ENCODE measurements at regions of chr7 and their contacts with region 1.

Region 1: GRCh38 chr7:129914536-129915272 is 38.1 kb downstream of the UBE2H start:
- DNase-seq: peak; percentile 33 to 56
- ATAC-seq: peak; percentile 83 to 89 (median 86)
- H3K4me3 ChIP-seq: no peak overlapping the region
- H3K4me3 Mint-ChIP-seq: peak overlapping the region; percentile 84
- H3K27ac ChIP-seq: peak overlapping the region; percentile 49
- H3K27ac Mint-ChIP-seq: peak overlapping the region; percentile 81 to 94
- H3K4me1 ChIP-seq: peaks cover 29% of the 10 kb centered on the region
- H3K4me1 Mint-ChIP-seq: peaks cover 70 to 74% of the 10 kb centered on the region in 2 donors
- H3K27me3 ChIP-seq: no peaks in the 10 kb centered on the region
- H3K27me3 Mint-ChIP-seq: no peaks in the 10 kb centered on the region
- CTCF ChIP-seq: no peak

Region 2: DNA sequence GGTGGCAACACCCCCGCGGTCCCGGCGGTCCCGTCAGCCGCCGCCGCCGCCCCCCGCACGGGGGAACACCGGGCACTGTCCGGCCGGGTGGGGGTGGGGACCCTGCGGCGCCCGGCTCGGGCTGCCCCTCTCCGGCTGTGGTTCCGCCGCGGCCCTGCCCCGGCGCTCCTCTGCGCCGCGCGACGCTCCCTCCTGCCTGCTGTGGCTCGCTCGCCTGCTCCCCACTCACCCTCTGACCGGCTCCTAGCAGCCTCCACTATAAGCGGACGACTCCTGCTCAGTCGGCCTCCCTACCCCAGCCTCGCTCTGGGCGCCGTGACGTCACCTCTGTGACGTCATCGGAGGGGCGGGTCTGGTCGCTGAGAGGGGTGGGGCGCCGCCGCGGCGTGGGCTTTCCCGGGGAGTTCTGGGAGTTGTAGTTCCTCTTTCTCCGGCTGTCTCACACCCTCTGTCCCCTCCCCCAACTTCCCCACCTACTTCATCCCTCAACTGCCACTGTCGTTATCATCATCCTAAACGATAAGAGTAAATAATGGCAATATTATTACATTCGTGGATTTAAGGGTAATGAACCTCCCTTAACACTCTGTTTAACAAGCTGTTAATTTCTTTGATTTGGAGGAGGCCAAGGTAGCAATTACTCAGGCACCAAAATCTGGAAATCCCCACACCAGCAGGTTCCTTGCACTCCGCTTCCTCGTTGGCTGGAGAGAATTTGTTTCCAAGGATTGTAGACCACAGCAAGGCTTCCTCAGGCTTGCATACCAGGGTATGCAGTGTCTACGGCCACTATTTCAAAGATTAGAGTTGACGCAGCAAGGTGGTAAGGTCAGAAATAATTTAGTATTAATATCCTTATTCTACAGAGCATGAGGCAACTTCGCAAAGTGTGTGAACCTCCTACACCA is 38.2 kb after region 1 on chr7 and contains the start of gene UBE2H:
- intact Hi-C with region 1: loop called (anchors 2 kb)
- DNase-seq: peak; percentile 87 to 96
- ATAC-seq: peak; percentile 73 to 90 (median 83)
- H3K4me3 ChIP-seq: peak within 1 kb of the TSS; percentile 63
- H3K4me3 Mint-ChIP-seq: peak within 1 kb of the TSS; percentile 98
- H3K27ac ChIP-seq: peak within 1 kb of the TSS; percentile 80
- H3K27ac Mint-ChIP-seq: no peak within 1 kb of the TSS
- H3K4me1 ChIP-seq: peaks cover 43% of the 10 kb centered on the region
- H3K4me1 Mint-ChIP-seq: peaks cover 7 to 9% of the 10 kb centered on the region in 2 donors
- H3K27me3 ChIP-seq: no peaks in the 10 kb centered on the region
- H3K27me3 Mint-ChIP-seq: peaks cover 2 to 6% of the 10 kb centered on the region in 2 donors
- CTCF ChIP-seq: no peak
- total RNA-seq, gene UBE2H: 80.9 to 86.9 (median 83.1) TPM

Region 3: DNA sequence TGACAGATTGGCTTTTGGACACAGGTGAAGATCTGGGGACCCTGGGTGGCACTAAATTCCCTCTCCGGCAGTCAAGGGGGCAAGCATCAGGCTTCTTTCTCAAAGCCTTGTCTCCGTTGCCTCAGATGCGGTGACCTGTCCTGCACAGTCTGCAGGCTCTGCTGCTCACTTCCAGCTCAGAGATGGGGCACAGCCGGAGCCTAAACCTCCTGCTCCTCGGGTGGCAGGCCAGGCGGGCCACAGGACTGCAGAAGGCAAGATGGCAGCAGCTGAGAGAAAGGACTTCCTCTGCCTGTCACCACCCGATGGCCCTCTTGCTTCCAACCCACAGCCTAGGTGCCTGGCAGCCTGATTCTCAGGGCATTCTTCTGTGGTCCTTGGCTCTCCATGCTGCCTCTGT is 92.1 kb after region 1 on chr7:
- intact Hi-C with region 1: no loop called
- DNase-seq: no peak
- ATAC-seq: no peak
- H3K4me3 ChIP-seq: no peak overlapping the region
- H3K4me3 Mint-ChIP-seq: no peak overlapping the region
- H3K27ac ChIP-seq: no peak overlapping the region
- H3K27ac Mint-ChIP-seq: no peak overlapping the region
- H3K4me1 ChIP-seq: no peaks in the 10 kb centered on the region
- H3K4me1 Mint-ChIP-seq: peaks cover 5% of the 10 kb centered on the region in 2 donors
- H3K27me3 ChIP-seq: no peaks in the 10 kb centered on the region
- H3K27me3 Mint-ChIP-seq: no peaks in the 10 kb centered on the region
- CTCF ChIP-seq: no peak

Measured in natural killer cell (primary cell).